IMR-90 (cell line): ENCODE measurements at regions of chr14 and their contacts with region 1.

Region 1: GRCh38 chr14:35140718-35141581 is 18.6 kb downstream of the PRORP start:
- DNase-seq: peak; percentile 52
- ATAC-seq: peak; percentile 62; the same call in 1 of the 2 replicates
- H3K4me3 ChIP-seq: no peak overlapping the region
- H3K27ac ChIP-seq: no peak overlapping the region
- H3K4me1 ChIP-seq: no peaks in the 10 kb centered on the region
- H3K27me3 ChIP-seq: no peaks in the 10 kb centered on the region
- CTCF ChIP-seq: peak; percentile 62
- POLR2A ChIP-seq: no peak
- RAD21 ChIP-seq: peak; percentile 64

Region 2: GRCh38 chr14:34614638-34615037 is 526.3 kb before region 1 on chr14:
- CTCF ChIA-PET with region 1: no interaction called
- POLR2A ChIA-PET with region 1: interaction called, 14 read pairs
- dilution Hi-C with region 1: no loop called
- in situ Hi-C with region 1: no loop called
- intact Hi-C with region 1: no loop called
- DNase-seq: no peak
- ATAC-seq: no peak
- H3K4me3 ChIP-seq: no peak overlapping the region
- H3K27ac ChIP-seq: no peak overlapping the region
- H3K4me1 ChIP-seq: no peaks in the 10 kb centered on the region
- H3K27me3 ChIP-seq: no peaks in the 10 kb centered on the region
- CTCF ChIP-seq: no peak
- POLR2A ChIP-seq: no peak
- RAD21 ChIP-seq: no peak

Region 3: GRCh38 chr14:35215110-35215876 is 74.3 kb after region 1 on chr14:
- CTCF ChIA-PET with region 1: interaction called, 4 read pairs
- POLR2A ChIA-PET with region 1: no interaction called
- dilution Hi-C with region 1: no loop called
- in situ Hi-C with region 1: no loop called
- intact Hi-C with region 1: loop called (anchors 5 kb)
- DNase-seq: peak; percentile 80
- ATAC-seq: peak; percentile 83
- H3K4me3 ChIP-seq: no peak overlapping the region
- H3K27ac ChIP-seq: no peak overlapping the region
- H3K4me1 ChIP-seq: peaks cover 7% of the 10 kb centered on the region
- H3K27me3 ChIP-seq: no peaks in the 10 kb centered on the region
- CTCF ChIP-seq: peak; percentile 84
- POLR2A ChIP-seq: no peak
- RAD21 ChIP-seq: peak; percentile 70

Region 4: DNA sequence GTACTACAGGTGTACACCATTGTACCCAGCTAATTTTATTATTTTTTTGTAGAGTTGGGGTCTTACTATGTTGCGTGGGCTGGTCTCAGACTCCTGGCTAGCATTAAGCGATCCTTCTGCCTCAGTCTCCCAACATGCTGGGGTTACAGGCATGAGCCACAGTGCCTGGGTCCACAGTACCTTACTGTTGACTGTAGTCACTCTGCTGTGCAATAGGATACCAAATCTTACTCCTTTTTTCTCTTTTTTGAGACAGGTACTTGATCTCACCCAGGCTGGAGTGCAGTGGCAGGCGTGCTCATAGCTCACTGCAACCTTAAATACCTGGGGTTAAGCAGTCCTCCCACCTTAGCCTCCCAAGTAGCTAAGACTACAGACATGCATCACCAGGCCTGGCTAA is 176.9 kb after region 1 on chr14:
- CTCF ChIA-PET with region 1: no interaction called
- POLR2A ChIA-PET with region 1: interaction called, 10 read pairs
- dilution Hi-C with region 1: no loop called
- in situ Hi-C with region 1: no loop called
- intact Hi-C with region 1: no loop called
- DNase-seq: no peak
- ATAC-seq: no peak
- H3K4me3 ChIP-seq: no peak overlapping the region
- H3K27ac ChIP-seq: no peak overlapping the region
- H3K4me1 ChIP-seq: no peaks in the 10 kb centered on the region
- H3K27me3 ChIP-seq: no peaks in the 10 kb centered on the region
- CTCF ChIP-seq: no peak
- POLR2A ChIP-seq: no peak
- RAD21 ChIP-seq: no peak

Region 5: DNA sequence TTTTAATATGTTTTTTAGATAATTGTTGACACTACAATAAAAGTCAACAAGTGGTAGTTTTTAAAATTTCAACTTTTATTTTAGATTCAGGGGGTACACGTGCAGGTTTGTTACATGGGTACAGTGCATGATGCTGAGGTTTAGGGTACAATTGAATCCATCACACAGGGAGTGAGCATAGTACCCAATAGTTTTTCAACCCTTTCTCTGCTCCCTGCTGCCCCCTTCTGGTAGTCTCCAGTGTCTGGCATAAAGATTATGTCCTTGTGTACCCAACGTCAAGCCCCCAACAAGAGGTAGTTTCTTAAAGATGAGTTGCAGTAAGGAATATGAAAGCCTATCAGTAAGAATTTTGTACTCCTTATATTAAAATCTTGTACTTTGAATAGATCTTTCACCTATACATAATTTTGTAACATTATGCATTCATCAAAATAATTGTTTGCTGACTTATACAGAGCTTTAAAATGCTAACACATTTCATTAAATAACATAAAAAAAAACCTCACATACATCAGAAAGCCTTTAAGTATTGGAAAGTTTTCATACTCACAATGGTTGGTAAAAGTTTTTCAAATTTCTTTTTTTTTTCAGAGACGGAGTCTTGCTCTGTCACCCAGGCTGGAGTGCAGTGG is 673.5 kb after region 1 on chr14:
- CTCF ChIA-PET with region 1: no interaction called
- POLR2A ChIA-PET with region 1: no interaction called
- dilution Hi-C with region 1: no loop called
- in situ Hi-C with region 1: loop called (anchors 25 kb)
- intact Hi-C with region 1: no loop called
- DNase-seq: peak; percentile 40
- ATAC-seq: peak; percentile 89
- H3K4me3 ChIP-seq: no peak overlapping the region
- H3K27ac ChIP-seq: no peak overlapping the region
- H3K4me1 ChIP-seq: no peaks in the 10 kb centered on the region
- H3K27me3 ChIP-seq: no peaks in the 10 kb centered on the region
- CTCF ChIP-seq: peak; percentile 64
- POLR2A ChIP-seq: no peak
- RAD21 ChIP-seq: peak; percentile 33; the same call in 1 of the 2 replicates